ENCODE measurements at regions of chr17 and their contacts with region 1.

Region 1: GRCh38 chr17:65656382-65657250 is 95.2 kb upstream of the AXIN2 start:
- DNase-seq: no peak
- H3K4me3 Mint-ChIP-seq: no peak overlapping the region
- H3K27ac Mint-ChIP-seq: no peak overlapping the region
- H3K4me1 Mint-ChIP-seq: no peaks in the 10 kb centered on the region
- H3K27me3 Mint-ChIP-seq: no peaks in the 10 kb centered on the region

Region 2: DNA sequence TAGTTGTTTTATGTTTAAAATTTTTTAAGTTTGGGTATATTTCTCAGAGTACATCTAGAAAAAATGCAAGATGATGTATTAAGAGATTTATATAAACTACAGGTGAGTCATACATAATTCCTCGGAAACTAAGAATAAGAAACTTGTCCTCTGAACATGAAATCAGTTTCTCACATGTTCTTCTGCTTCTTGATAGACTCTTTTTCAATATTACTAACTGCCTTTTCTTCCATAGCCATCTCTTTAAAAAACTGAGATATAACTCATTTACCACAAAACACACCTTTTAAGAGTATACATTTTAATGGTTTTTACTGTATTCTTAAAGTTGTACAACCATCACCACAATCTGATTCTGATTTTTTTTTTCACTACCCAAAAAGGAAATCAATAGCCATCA is 143.3 kb after region 1 on chr17:
- intact Hi-C with region 1: loop called (anchors 2 kb)
- DNase-seq: no peak
- H3K4me3 Mint-ChIP-seq: no peak overlapping the region
- H3K27ac Mint-ChIP-seq: peak overlapping the region; percentile 30
- H3K4me1 Mint-ChIP-seq: peaks cover 11% of the 10 kb centered on the region
- H3K27me3 Mint-ChIP-seq: no peaks in the 10 kb centered on the region